RWPE1 (cell line): ENCODE measurements at regions of chr10 and their contacts with region 1.

Region 1: DNA sequence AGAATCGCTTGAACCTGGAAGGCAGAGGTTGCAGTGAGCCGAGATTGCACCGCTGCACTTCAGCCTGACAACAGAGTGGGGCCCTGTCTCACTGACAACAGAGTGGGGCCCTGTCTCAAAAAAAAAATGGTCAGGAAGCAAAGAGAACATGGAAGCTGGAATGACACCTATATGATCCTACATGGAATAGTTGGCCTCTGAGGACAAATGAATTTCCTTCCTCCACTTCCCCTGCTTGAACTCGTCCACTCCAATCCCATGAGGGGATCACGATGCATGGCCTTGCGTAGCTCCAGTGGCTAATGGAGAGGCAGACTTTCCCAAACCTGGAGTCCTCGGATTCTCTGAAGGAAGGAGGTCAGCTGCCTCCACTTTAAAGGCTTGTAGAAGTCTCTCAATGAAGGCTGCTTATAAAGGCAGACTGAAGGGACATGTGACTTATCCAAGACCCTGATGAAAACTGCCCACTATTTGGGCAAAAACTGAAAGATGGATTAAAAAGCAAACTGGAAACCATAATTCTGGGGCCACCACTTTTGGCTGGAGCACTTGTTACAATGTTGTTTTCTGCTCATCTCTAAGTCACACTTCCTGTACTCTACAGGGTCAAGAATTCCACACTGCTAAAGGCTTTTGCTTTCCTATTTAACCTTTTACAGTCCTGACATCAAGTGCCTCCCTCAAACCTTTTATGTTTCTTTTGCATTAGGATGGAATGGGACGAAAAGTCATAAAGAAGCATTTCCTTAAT is 214.6 kb downstream of the PRPF18 start:
- DNase-seq: no peak
- H3K27ac ChIP-seq: no peak overlapping the region
- CTCF ChIP-seq: no peak

Region 2: GRCh38 chr10:13637303-13637856 is 164.0 kb before region 1 on chr10:
- CTCF ChIA-PET with region 1: no interaction called
- POLR2A ChIA-PET with region 1: no interaction called
- DNase-seq: no peak
- H3K27ac ChIP-seq: no peak overlapping the region
- CTCF ChIP-seq: no peak

Region 3: DNA sequence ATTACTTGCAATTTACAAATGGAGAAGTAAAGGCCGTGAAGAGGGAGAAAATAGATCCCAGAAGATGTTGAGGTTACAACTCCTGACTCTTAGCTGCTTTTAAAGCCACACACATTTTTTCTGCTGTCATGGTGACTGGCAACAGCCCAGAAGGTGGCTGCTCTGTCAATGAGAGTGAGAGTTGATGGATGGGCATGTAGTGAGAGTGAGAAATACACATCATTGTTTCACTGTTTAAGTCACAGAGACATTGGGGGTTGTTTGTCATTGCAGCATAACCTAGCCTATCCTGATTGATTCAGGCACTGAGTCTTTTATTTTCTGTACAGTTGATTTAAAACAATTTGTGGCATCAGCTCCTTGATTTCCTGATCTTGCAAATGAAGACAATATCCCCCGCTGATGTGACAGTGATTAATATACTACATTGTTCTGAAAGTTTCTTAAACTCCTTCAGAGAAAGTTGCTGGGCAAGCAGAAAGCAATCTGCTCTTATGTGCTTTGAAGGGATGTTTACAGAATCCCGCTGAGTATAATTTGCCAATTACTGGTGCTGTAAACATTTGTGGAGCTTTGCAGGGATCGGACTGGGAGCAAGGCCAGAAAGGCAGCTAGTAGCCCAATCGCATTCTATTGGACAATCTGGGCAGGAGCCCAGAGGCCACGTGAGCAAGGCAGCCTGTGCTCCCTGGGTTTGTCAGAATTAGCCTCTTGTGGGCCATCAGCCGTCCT is 15.0 kb after region 1 on chr10:
- CTCF ChIA-PET with region 1: no interaction called
- POLR2A ChIA-PET with region 1: no interaction called
- DNase-seq: no peak
- H3K27ac ChIP-seq: no peak overlapping the region
- CTCF ChIP-seq: no peak

Region 4: GRCh38 chr10:14836208-14836607 is 1034.9 kb after region 1 on chr10:
- CTCF ChIA-PET with region 1: no interaction called
- POLR2A ChIA-PET with region 1: interaction called, 10 read pairs
- DNase-seq: no peak
- H3K27ac ChIP-seq: peak overlapping the region; percentile 35; the same call in 1 of the 2 replicates
- CTCF ChIP-seq: no peak